Mammary epithelial cell (primary cell): ENCODE measurements at regions of chr22 and their contacts with region 1.

Region 1: GRCh38 chr22:27230903-27231665 is 570.5 kb downstream of the MN1 start:
- DNase-seq: no peak
- H3K4me3 ChIP-seq: no peak overlapping the region
- H3K27ac ChIP-seq: no peak overlapping the region
- H3K4me1 ChIP-seq: no peaks in the 10 kb centered on the region
- H3K27me3 ChIP-seq: peaks cover 7% of the 10 kb centered on the region
- CTCF ChIP-seq: no peak

Region 2: GRCh38 chr22:27164781-27165503 is 66.1 kb before region 1 on chr22:
- CTCF ChIA-PET with region 1: no interaction called
- dilution Hi-C with region 1: loop called (anchors 5 kb)
- in situ Hi-C with region 1: no loop called
- intact Hi-C with region 1: no loop called
- DNase-seq: no peak
- H3K4me3 ChIP-seq: no peak overlapping the region
- H3K27ac ChIP-seq: no peak overlapping the region
- H3K4me1 ChIP-seq: no peaks in the 10 kb centered on the region
- H3K27me3 ChIP-seq: peaks cover 2% of the 10 kb centered on the region
- CTCF ChIP-seq: no peak

Region 3: GRCh38 chr22:27195094-27195493 is 36.0 kb before region 1 on chr22:
- CTCF ChIA-PET with region 1: no interaction called
- dilution Hi-C with region 1: no loop called
- in situ Hi-C with region 1: no loop called
- intact Hi-C with region 1: no loop called
- DNase-seq: no peak
- H3K4me3 ChIP-seq: no peak overlapping the region
- H3K27ac ChIP-seq: no peak overlapping the region
- H3K4me1 ChIP-seq: no peaks in the 10 kb centered on the region
- H3K27me3 ChIP-seq: no peaks in the 10 kb centered on the region
- CTCF ChIP-seq: no peak

Region 4: DNA sequence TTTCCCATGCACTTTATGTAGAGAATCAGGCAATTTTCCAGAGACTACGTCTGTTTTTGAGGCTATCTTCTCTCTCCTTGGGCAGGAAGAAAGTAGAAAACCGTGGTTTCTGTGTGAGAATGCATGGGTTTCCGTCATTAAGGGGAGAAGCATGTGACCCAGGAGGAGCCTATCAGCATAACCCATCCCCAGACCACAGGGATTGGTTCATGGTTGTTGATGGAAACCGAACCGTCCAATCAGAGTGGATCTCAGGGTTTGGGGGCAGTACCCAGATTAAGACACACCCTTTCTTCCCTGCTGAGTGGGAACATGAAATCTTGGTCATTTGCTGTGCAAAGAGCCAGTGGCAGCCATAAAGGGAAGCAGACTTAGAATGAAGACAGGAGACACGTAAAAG is 52.6 kb after region 1 on chr22:
- CTCF ChIA-PET with region 1: no interaction called
- dilution Hi-C with region 1: loop called (anchors 5 kb)
- in situ Hi-C with region 1: no loop called
- intact Hi-C with region 1: no loop called
- DNase-seq: no peak
- H3K4me3 ChIP-seq: no peak overlapping the region
- H3K27ac ChIP-seq: no peak overlapping the region
- H3K4me1 ChIP-seq: no peaks in the 10 kb centered on the region
- H3K27me3 ChIP-seq: no peaks in the 10 kb centered on the region
- CTCF ChIP-seq: no peak

Region 5: DNA sequence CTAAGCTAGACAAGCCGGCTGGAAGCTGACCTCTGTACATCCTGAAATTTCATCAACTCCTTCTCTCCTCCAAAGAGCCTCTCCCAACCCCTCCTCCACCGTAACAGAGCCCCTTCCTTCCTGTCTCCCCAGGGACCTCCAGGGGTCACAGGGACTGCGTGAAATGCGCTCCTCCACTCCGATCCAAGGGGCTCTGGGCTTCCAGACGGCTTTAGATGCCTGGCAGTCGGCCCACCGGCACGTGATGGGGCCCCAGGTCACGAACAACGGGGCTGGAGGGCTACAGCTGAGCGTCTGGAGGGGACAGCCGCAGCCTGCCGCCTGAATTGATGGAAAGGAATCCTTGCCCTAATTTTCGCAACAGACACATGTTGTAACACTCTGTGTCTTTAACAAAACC is 306.4 kb after region 1 on chr22:
- CTCF ChIA-PET with region 1: no interaction called
- dilution Hi-C with region 1: no loop called
- in situ Hi-C with region 1: no loop called
- intact Hi-C with region 1: no loop called
- DNase-seq: no peak
- H3K4me3 ChIP-seq: no peak overlapping the region
- H3K27ac ChIP-seq: no peak overlapping the region
- H3K4me1 ChIP-seq: no peaks in the 10 kb centered on the region
- H3K27me3 ChIP-seq: no peaks in the 10 kb centered on the region
- CTCF ChIP-seq: no peak